ENCODE measurements at regions of chr14 and their contacts with region 1.

Region 1: DNA sequence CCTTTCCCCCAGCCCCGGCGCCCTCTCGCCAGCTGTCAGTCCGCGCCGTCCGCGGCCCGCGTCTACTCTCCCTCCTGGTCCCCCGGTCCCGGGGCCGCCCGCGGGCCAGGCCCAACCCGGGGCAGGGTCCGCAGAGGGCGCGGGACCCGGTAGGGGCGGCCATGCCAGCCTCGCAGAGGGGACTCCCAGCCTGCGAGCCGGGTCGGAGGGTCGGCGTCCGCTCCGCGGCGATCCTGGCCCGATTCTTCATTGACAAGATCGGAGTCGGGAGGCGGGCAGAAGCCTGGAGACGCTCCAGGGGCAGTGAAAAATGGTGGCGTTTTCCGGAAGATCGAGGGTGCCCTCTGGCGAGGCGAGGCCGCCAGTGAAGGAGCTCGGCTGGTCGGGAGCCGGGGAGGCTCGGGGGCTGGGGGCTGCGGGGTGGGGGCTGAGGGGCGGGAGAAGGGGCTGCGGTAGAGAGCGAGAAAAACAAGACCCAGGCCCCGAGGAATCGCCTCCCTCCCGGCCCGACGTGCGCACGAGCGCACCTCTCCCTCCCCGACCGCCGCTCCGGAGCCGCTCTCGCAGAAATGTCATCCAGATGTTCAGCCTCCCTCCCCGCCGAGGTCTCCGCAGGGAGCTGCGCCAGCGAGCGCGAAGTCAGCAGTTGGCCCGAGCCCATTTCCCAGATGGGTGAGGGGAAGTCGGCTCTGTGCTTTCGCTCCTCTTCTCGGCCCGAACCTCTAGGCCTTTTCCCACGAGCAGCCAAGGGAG is 647 bp upstream of the TGFB3 start:
- DNase-seq: no peak
- H3K4me3 ChIP-seq: peak overlapping the region; percentile 66
- CTCF ChIP-seq: peak; percentile 84

Region 2: DNA sequence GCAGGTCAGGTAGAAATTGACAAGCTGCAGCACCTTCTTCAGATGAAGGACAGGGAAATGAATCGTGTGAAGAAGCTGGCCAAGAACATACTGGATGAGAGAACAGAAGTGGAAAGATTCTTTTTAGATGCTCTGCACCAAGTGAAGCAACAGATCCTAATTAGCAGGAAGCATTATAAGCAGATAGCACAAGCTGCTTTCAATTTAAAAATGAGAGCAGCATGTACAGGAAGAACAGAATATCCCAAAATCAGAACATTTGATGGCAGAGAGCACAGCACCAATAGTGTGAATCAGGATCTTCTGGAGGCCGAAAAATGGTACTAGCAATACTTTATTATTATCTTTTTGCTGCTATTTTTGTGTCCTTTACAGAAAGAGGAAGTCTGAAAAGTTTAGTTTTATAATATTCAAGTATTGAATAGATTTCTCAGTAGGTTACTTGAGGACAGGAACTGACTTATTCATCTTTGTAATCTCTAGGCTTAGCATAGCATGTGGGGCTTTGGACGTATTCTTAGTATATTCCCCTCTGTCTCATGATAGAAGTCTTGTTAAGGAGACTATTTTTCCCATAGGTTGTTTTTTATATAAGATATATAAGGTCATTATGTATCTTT is 1932.5 kb before region 1 on chr14:
- CTCF ChIA-PET with region 1: no interaction called
- POLR2A ChIA-PET with region 1: no interaction called
- DNase-seq: no peak
- H3K4me3 ChIP-seq: no peak overlapping the region
- CTCF ChIP-seq: no peak

Region 3: GRCh38 chr14:75619548-75619947 is 362.9 kb before region 1 on chr14:
- CTCF ChIA-PET with region 1: no interaction called
- POLR2A ChIA-PET with region 1: no interaction called
- DNase-seq: no peak
- H3K4me3 ChIP-seq: no peak overlapping the region
- CTCF ChIP-seq: no peak

Region 4: GRCh38 chr14:75702616-75703261 is 279.7 kb before region 1 on chr14:
- CTCF ChIA-PET with region 1: interaction called, 715 read pairs
- POLR2A ChIA-PET with region 1: no interaction called
- DNase-seq: no peak
- H3K4me3 ChIP-seq: no peak overlapping the region
- CTCF ChIP-seq: no peak

Region 5: DNA sequence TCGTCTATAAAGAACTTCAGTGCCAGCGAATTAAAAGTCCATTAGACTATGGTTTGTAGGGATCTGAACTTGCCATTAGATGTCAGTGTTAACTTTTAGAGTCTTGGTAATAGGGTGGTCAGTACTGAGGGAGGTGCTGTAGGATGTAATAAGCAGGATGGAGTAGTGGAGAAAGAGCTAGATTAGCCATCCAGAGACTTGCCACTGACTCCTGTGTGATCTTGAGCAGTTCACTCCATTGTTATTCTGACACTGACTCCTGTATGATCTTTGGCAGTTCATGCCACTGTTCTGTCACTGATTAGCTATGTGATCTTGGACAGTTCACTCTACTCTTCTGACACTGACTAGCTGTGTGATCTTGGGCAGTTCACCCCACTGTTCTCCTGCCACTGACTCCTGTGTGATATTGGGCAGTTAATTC is 187.8 kb before region 1 on chr14:
- CTCF ChIA-PET with region 1: interaction called, 333 read pairs
- POLR2A ChIA-PET with region 1: no interaction called
- DNase-seq: peak; percentile 21
- H3K4me3 ChIP-seq: no peak overlapping the region
- CTCF ChIP-seq: peak; percentile 50

Region 6: DNA sequence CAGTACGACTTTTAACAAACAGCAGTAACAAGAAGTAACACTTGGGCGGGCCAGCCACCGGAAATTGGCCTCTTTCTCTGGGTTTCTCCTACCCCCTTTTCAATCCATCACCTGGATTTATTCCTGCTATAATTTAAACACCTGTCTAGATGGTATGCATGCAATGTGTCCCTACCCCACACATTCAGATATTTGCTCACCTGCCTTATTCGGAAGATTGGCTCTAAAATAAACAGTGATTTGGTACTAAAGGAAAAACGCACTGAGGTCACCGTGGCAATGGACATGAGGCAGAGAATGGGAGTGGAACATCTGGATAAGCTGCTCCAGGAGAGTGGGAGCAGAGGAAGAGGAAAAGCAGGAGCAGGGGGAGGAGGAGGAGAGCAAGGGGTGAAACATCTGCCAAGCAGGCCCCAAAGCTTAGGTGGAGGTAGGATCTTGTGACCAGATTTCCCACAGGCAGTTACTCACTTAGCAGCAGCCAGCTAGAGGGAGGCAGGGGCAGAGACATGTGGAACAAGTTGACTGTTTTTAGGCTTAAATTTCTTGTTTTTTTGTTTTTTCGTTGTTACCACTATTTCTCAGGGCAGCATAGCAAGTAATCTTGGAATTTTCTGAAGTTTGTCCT is 170.5 kb before region 1 on chr14:
- CTCF ChIA-PET with region 1: interaction called, 333 read pairs
- POLR2A ChIA-PET with region 1: no interaction called
- DNase-seq: no peak
- H3K4me3 ChIP-seq: no peak overlapping the region
- CTCF ChIP-seq: no peak

Region 7: DNA sequence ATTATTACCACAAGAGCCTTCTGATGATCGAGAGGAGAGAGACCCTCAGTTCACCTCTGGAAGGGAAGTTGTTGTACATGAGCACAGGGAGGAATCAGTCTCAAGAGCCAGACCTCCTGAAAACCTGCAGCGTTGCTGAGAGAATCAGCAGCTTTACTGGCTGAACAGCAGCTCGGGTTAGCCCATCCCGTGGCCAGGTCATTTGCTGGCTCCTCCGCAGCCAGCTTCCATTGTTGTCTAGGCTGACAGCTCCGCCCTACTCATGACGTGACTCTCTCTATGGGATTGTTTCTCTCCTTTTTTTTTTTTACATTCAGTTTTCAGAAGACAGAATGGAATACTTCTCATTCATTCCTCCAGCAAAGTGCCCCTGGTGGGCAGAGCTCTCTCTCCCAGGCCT is 70.6 kb before region 1 on chr14:
- CTCF ChIA-PET with region 1: interaction called, 230 read pairs
- POLR2A ChIA-PET with region 1: no interaction called
- DNase-seq: no peak
- H3K4me3 ChIP-seq: no peak overlapping the region
- CTCF ChIP-seq: no peak

Region 8: DNA sequence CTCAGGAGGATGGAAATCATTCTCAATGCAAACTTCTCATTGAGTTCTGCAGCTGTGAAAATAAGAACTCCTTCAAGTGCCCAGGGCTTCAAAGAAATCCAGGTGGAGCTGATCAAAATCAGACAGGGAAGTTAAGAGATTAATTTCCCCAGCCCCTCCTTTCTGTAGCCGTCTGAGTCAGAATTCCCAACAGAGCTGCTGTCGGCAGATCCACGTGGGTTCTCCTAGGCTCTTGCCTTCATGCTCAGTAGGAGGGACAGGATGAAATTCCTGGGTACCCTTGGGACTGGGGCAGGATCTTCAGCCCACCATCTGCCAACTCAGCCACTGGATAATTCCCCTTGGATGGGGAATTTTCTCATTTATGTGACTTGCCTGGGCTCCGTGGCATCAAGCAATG is 14.0 kb before region 1 on chr14:
- CTCF ChIA-PET with region 1: interaction called, 16 read pairs
- POLR2A ChIA-PET with region 1: no interaction called
- DNase-seq: no peak
- H3K4me3 ChIP-seq: no peak overlapping the region
- CTCF ChIP-seq: no peak

Region 9: GRCh38 chr14:76115010-76115422 is 132.6 kb after region 1 on chr14:
- CTCF ChIA-PET with region 1: no interaction called
- POLR2A ChIA-PET with region 1: no interaction called
- DNase-seq: no peak
- H3K4me3 ChIP-seq: no peak overlapping the region
- CTCF ChIP-seq: no peak

Measured in AG04449 (cell line).